ENCODE measurements at regions of chr17 and their contacts with region 1.

Region 1: GRCh38 chr17:42997984-42998938 is at the start of gene RPL27:
- DNase-seq: peak; percentile 92 to 99 (median 97)
- H3K4me3 ChIP-seq: peak within 1 kb of the TSS; percentile 90
- H3K4me3 Mint-ChIP-seq: peak within 1 kb of the TSS; percentile 79 to 97 (median 96)
- H3K27ac ChIP-seq: peak within 1 kb of the TSS; percentile 94
- H3K27ac Mint-ChIP-seq: peak within 1 kb of the TSS; percentile 89 to 100 (median 99)
- H3K4me1 ChIP-seq: peaks cover 22% of the 10 kb centered on the region
- H3K4me1 Mint-ChIP-seq: peaks cover 22 to 31% (median 29%) of the 10 kb centered on the region in 3 donors
- H3K27me3 ChIP-seq: no peaks in the 10 kb centered on the region
- H3K27me3 Mint-ChIP-seq: no peaks in the 10 kb centered on the region
- total RNA-seq, gene RPL27: 1,412 to 1,428 TPM

Region 2: DNA sequence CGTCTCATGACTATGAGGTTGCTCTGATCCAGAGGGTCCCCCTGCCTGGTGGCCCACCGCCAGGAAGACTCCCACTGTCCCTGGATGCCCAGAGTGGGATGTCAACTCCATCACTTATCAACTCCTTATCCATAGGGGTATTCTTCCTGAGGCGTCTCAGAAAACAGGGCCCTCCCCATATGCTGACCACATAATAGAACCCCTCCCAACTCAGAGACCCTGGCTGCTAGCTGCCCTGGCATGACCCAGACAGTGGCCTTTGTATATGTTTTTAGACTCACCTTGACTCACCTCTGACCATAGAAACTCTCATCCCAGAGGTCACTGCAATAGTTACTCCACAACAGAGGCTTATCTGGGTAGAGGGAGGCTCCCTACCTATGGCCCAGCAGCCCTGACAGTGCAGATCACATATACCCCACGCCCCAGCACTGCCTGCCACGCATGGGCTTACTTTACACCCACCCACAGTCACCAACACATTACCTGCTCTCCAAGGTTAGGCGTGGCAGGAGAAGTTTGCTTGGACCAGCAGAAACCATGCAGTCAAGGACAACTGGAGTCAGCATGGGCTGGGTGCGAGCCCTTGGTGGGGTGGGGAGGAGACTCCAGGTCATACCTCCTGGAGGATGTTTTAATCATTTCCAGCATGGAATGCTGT is 100.0 kb before region 1 on chr17:
- CTCF ChIA-PET with region 1: no interaction called
- POLR2A ChIA-PET with region 1: no interaction called
- DNase-seq: no peak
- H3K4me3 ChIP-seq: no peak overlapping the region
- H3K4me3 Mint-ChIP-seq: no peak overlapping the region
- H3K27ac ChIP-seq: no peak overlapping the region
- H3K27ac Mint-ChIP-seq: peak overlapping the region in 1 of 8 donors; percentile 25
- H3K4me1 ChIP-seq: no peaks in the 10 kb centered on the region
- H3K4me1 Mint-ChIP-seq: no peaks in the 10 kb centered on the region
- H3K27me3 ChIP-seq: peaks cover 4% of the 10 kb centered on the region
- H3K27me3 Mint-ChIP-seq: peaks cover 29 to 52% of the 10 kb centered on the region in 2 donors

Region 3: DNA sequence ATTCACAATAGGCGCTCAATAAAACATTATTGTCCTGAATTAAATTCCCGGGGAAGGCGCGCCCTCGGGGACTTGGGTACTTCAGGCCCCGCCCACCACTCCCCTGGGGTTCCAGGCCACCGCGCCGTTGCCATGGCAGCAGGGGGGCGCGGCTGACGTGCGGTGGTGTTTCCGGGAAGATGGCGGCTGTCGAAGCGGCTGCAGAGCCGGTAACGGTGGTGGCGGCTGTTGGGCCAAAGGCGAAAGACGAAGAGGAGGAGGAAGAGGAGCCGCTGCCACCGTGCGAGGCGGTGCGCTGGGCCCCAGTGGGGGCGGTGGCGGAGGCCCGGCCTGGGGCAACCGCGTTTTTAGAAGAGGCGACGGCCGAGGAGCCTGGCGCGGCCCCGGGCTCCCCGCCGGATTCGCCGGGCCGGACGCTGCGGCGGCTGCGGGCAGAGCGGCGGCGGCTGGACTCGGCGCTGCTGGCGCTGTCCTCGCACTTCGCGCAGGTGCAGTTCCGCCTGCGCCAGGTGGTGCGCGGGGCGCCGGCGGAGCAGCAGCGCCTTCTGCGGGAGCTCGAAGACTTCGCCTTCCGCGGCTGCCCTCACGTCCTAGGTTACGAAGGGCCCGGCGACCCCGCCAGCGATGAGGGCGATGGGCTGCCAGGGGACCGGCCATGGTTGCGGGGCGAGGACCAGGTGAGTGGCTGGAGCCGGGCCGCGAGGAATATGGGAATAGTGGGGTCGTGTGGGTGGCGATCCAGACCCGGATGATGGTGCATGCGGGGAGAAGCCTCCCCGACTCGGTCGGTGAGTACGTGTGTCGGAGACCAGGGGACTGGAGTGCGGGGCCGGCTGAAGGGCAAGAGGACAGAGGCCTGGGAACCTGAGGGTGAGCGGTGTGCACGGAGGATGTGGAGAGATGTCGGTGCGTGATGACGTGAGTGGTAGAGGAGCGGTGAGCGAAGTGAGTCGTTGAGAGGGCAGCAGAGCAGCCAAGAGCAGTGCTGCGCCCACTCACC is 17.6 kb before region 1 on chr17 and contains the start of gene RUNDC1:
- CTCF ChIA-PET with region 1: interaction called, 12 read pairs
- POLR2A ChIA-PET with region 1: interaction called, 10 read pairs
- DNase-seq: peak; percentile 86 to 94 (median 89)
- H3K4me3 ChIP-seq: peak within 1 kb of the TSS; percentile 88
- H3K4me3 Mint-ChIP-seq: peak within 1 kb of the TSS; percentile 89 to 99 (median 97)
- H3K27ac ChIP-seq: peak within 1 kb of the TSS; percentile 70
- H3K27ac Mint-ChIP-seq: peak within 1 kb of the TSS; percentile 76 to 99 (median 98)
- H3K4me1 ChIP-seq: peaks cover 20% of the 10 kb centered on the region
- H3K4me1 Mint-ChIP-seq: peaks cover 27 to 47% (median 34%) of the 10 kb centered on the region in 3 donors
- H3K27me3 ChIP-seq: no peaks in the 10 kb centered on the region
- H3K27me3 Mint-ChIP-seq: peaks cover 0 to 5% of the 10 kb centered on the region in 2 donors
- total RNA-seq, gene RUNDC1: 12.8 to 13.1 TPM

Region 4: GRCh38 chr17:43024407-43025289 is 26.4 kb after region 1 on chr17 and contains the start of gene RND2:
- CTCF ChIA-PET with region 1: interaction called, 16 read pairs
- POLR2A ChIA-PET with region 1: interaction called, 23 read pairs
- DNase-seq: peak; percentile 67 to 94 (median 77)
- H3K4me3 ChIP-seq: peak within 1 kb of the TSS; percentile 97
- H3K4me3 Mint-ChIP-seq: peak within 1 kb of the TSS; percentile 87 to 97 (median 92)
- H3K27ac ChIP-seq: peak within 1 kb of the TSS; percentile 84
- H3K27ac Mint-ChIP-seq: peak within 1 kb of the TSS; percentile 78 to 96 (median 94)
- H3K4me1 ChIP-seq: peaks cover 22% of the 10 kb centered on the region
- H3K4me1 Mint-ChIP-seq: peaks cover 14 to 34% (median 27%) of the 10 kb centered on the region in 3 donors
- H3K27me3 ChIP-seq: no peaks in the 10 kb centered on the region
- H3K27me3 Mint-ChIP-seq: peaks cover 0 to 1% of the 10 kb centered on the region in 2 donors
- total RNA-seq, gene RND2: 0.04 to 0.22 TPM

Region 5: GRCh38 chr17:43170766-43171585 is 172.7 kb after region 1 on chr17 and contains the start of gene NBR1:
- CTCF ChIA-PET with region 1: interaction called, 5 read pairs
- POLR2A ChIA-PET with region 1: interaction called, 13 read pairs
- DNase-seq: peak; percentile 87 to 98 (median 96)
- H3K4me3 ChIP-seq: peak within 1 kb of the TSS; percentile 90
- H3K4me3 Mint-ChIP-seq: no peak within 1 kb of the TSS
- H3K27ac ChIP-seq: peak within 1 kb of the TSS; percentile 99
- H3K27ac Mint-ChIP-seq: no peak within 1 kb of the TSS
- H3K4me1 ChIP-seq: peaks cover 43% of the 10 kb centered on the region
- H3K4me1 Mint-ChIP-seq: peaks cover 30 to 37% (median 34%) of the 10 kb centered on the region in 3 donors
- H3K27me3 ChIP-seq: no peaks in the 10 kb centered on the region
- H3K27me3 Mint-ChIP-seq: no peaks in the 10 kb centered on the region
- total RNA-seq, gene NBR1: 42.6 to 44.3 TPM

Region 6: DNA sequence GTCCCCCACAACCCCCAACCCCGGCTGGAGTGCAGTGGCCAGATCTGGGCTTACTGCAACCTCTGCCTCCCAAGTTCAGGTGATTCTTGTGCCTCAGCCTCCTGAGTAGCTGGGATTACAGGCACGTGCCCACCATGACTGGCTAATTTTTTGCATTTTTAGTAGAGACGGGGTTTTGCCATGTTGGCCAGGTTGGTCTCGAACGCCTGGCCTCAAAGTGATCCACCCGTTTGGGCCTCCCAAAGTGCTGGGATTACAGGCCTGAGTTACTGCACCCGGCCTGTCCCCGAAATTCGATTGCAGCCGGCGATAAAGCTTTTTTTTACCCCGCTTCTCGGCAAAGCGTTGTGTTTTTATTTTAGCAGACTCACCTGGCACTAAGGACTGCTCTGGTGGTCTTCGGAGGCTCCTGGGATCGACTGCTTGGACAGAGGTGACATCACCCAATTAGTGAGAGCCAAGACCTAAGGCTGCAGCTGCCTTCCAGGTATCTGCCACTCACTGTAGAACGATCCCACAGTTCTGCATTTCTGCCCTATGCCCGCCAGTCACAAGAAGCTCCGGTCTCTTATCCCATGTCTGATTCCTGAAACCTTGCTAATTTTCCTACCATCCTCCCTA is 318.4 kb after region 1 on chr17:
- CTCF ChIA-PET with region 1: interaction called, 4 read pairs
- POLR2A ChIA-PET with region 1: interaction called, 17 read pairs
- DNase-seq: peak; percentile 13 to 62 (median 28)
- H3K4me3 ChIP-seq: no peak overlapping the region
- H3K4me3 Mint-ChIP-seq: peak overlapping the region in 5 of 7 donors; percentile 16 to 74 (median 38)
- H3K27ac ChIP-seq: no peak overlapping the region
- H3K27ac Mint-ChIP-seq: peak overlapping the region in 6 of 8 donors; percentile 10 to 72 (median 37)
- H3K4me1 ChIP-seq: no peaks in the 10 kb centered on the region
- H3K4me1 Mint-ChIP-seq: peaks cover 2 to 15% (median 12%) of the 10 kb centered on the region in 3 donors
- H3K27me3 ChIP-seq: no peaks in the 10 kb centered on the region
- H3K27me3 Mint-ChIP-seq: no peaks in the 10 kb centered on the region

Region 7: DNA sequence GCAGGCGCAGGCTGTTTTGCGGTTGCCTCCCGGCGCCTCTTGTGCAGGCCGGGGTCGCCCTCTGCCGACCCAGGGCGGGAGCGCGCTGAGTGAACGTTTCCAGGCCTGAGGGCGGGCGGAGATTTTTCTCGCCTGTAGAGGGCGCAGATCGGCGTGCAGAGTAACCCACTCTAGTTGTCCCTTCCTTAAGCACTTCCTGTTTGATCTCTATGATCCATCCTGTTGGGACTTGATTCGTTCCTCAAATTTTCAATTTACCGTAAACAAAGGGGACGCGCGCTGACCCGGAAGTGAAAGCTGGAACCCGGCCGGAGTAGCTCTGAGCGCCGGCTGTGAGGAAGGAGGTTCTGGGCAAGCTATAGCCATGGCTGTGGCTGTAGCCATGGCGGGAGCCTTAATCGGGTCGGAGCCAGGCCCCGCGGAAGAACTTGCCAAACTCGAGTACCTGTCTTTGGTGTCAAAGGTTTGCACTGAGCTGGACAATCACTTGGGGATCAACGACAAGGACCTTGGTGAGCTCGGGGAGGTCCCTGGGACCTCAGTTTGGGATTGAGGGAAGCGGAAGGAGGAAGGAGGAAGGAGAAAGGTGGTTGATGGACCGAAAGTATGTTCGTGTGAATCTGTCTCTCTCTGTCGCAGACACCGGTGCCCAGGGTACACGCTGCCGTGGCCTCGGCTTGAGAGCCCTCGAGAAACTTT is 485.6 kb after region 1 on chr17 and contains the start of gene DHX8:
- CTCF ChIA-PET with region 1: interaction called, 14 read pairs
- POLR2A ChIA-PET with region 1: interaction called, 5 read pairs
- DNase-seq: peak; percentile 98 to 99 (median 98)
- H3K4me3 ChIP-seq: peak within 1 kb of the TSS; percentile 96
- H3K4me3 Mint-ChIP-seq: peak within 1 kb of the TSS; percentile 98 to 100 (median 100)
- H3K27ac ChIP-seq: peak within 1 kb of the TSS; percentile 88
- H3K27ac Mint-ChIP-seq: peak within 1 kb of the TSS; percentile 85 to 99 (median 98)
- H3K4me1 ChIP-seq: peaks cover 29% of the 10 kb centered on the region
- H3K4me1 Mint-ChIP-seq: peaks cover 30 to 47% (median 41%) of the 10 kb centered on the region in 3 donors
- H3K27me3 ChIP-seq: no peaks in the 10 kb centered on the region
- H3K27me3 Mint-ChIP-seq: peaks cover 0 to 1% of the 10 kb centered on the region in 2 donors
- total RNA-seq, gene DHX8: 64.8 to 70.8 TPM

Measured in CD8-positive, alpha-beta memory T cell (primary cell).